ENCODE measurements at regions of chr14 and their contacts with region 1.

Region 1: GRCh38 chr14:105086833-105087307 is 21.6 kb upstream of the GPR132 start:
- DNase-seq: peak; percentile 93
- H3K4me3 Mint-ChIP-seq: peak overlapping the region; percentile 76
- H3K27ac Mint-ChIP-seq: peak overlapping the region; percentile 63
- H3K4me1 Mint-ChIP-seq: peaks cover 8% of the 10 kb centered on the region
- H3K27me3 Mint-ChIP-seq: no peaks in the 10 kb centered on the region

Region 2: GRCh38 chr14:104759001-104759969 is 327.6 kb before region 1 on chr14:
- CTCF ChIA-PET with region 1: no interaction called
- intact Hi-C with region 1: no loop called
- DNase-seq: no peak
- H3K4me3 Mint-ChIP-seq: no peak overlapping the region
- H3K27ac Mint-ChIP-seq: no peak overlapping the region
- H3K4me1 Mint-ChIP-seq: peaks cover 25% of the 10 kb centered on the region
- H3K27me3 Mint-ChIP-seq: no peaks in the 10 kb centered on the region

Region 3: GRCh38 chr14:104976198-104977007 is 110.5 kb before region 1 on chr14:
- CTCF ChIA-PET with region 1: interaction called, 3 read pairs
- intact Hi-C with region 1: loop called (anchors 1 kb)
- DNase-seq: peak; percentile 89
- H3K4me3 Mint-ChIP-seq: peak overlapping the region; percentile 30
- H3K27ac Mint-ChIP-seq: no peak overlapping the region
- H3K4me1 Mint-ChIP-seq: peaks cover 11% of the 10 kb centered on the region
- H3K27me3 Mint-ChIP-seq: peaks cover 17% of the 10 kb centered on the region

Region 4: DNA sequence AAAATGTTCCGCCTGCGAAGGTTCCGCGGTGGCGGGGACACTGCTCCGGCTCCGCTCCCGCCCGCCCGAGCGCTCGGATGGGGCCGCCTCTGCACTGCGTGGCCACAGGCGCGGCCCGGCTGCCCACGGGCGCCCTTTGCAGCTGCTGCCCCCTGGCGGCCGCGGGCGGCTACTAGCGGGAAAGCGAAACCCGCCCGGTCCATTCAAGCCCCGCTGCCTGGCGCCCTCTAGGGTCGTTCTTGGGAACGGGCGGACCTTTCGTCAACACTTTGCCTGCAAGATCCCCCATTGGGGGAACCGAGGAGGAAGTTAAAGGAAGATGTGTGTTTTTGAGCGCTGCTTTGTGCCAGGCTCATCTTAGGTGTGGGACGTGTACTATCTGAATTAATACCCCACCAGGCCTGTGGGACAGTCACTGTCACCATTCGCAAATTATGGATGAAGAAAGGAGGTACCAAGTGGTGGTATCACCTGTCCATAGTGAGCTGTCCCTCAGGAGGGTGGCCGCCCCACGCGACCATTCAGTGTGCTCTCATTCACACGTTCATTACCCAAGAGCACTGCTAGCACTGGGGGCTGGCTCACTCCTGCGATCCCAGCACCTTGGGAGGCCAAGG is 41.1 kb before region 1 on chr14:
- CTCF ChIA-PET with region 1: interaction called, 13 read pairs
- intact Hi-C with region 1: loop called (anchors 5 kb)
- DNase-seq: peak; percentile 95
- H3K4me3 Mint-ChIP-seq: no peak overlapping the region
- H3K27ac Mint-ChIP-seq: no peak overlapping the region
- H3K4me1 Mint-ChIP-seq: peaks cover 5% of the 10 kb centered on the region
- H3K27me3 Mint-ChIP-seq: no peaks in the 10 kb centered on the region

Region 5: GRCh38 chr14:105065280-105066228 is 21.3 kb before region 1 on chr14 and contains the start of gene GPR132:
- CTCF ChIA-PET with region 1: interaction called, 53 read pairs
- intact Hi-C with region 1: loop called (anchors 1 kb)
- DNase-seq: peak; percentile 97
- H3K4me3 Mint-ChIP-seq: peak within 1 kb of the TSS; percentile 84
- H3K27ac Mint-ChIP-seq: peak within 1 kb of the TSS; percentile 96
- H3K4me1 Mint-ChIP-seq: peaks cover 81% of the 10 kb centered on the region
- H3K27me3 Mint-ChIP-seq: no peaks in the 10 kb centered on the region
- total RNA-seq, gene GPR132: 11.3 to 15.3 TPM

Region 6: DNA sequence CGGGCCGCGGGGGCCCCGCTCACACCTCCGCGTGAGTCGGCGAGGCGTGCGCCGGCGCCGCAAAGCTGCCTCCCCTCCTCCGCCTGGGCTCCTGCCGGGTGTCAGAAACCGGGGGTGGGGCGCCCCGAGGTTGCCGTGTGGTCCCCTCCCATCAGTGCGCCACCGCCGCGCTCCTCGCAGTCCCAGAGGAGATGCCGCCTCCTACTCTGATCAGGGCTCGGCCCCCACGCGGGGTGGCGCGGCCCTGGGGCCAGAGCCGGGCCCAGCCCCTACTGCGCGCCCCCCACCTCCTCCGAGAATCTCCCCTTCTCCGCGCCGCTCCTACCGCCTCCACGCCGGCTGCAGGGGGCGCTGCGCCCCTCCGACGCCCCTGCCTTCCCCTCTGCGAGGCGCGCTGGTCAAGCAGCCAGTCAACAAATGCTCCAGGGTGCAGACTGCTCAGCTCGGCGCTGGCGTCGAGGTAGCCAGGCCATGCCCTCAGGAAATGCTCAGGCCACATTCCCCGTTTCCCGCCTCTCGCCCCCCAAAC is 82.2 kb after region 1 on chr14:
- CTCF ChIA-PET with region 1: interaction called, 3 read pairs
- intact Hi-C with region 1: loop called (anchors 5 kb)
- DNase-seq: peak; percentile 30
- H3K4me3 Mint-ChIP-seq: peak overlapping the region; percentile 47
- H3K27ac Mint-ChIP-seq: no peak overlapping the region
- H3K4me1 Mint-ChIP-seq: peaks cover 16% of the 10 kb centered on the region
- H3K27me3 Mint-ChIP-seq: peaks cover 12% of the 10 kb centered on the region

Region 7: DNA sequence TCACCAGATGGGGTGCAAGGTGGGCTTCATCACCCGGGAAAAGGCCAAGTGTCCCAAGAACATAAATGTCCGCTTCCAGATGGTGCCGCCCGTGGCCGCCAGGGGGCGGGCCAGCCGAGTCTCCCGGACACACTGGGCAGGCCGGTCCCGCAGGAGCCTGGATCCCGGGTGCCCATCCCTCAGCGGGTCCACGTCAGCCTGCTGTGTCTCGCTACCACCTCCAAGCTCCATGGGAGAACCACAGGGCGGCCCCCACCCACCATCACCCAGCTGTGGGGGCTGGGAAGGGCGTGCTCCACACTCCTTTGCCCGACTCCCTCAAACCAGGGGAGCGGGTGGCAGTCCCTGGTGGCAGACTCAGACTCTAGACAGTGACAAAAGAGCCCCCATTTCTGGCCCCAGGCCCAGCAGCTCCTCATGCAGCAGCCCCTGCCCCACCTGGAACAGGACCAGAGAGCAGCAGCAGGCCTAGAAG is 116.2 kb after region 1 on chr14:
- CTCF ChIA-PET with region 1: no interaction called
- intact Hi-C with region 1: loop called (anchors 5 kb)
- DNase-seq: peak; percentile 70
- H3K4me3 Mint-ChIP-seq: no peak overlapping the region
- H3K27ac Mint-ChIP-seq: no peak overlapping the region
- H3K4me1 Mint-ChIP-seq: peaks cover 6% of the 10 kb centered on the region
- H3K27me3 Mint-ChIP-seq: peaks cover 17% of the 10 kb centered on the region

Region 8: GRCh38 chr14:105248368-105248756 is 161.5 kb after region 1 on chr14 and contains the start of gene BTBD6:
- CTCF ChIA-PET with region 1: no interaction called
- intact Hi-C with region 1: no loop called
- DNase-seq: peak; percentile 87
- H3K4me3 Mint-ChIP-seq: peak within 1 kb of the TSS; percentile 73
- H3K27ac Mint-ChIP-seq: no peak within 1 kb of the TSS
- H3K4me1 Mint-ChIP-seq: peaks cover 20% of the 10 kb centered on the region
- H3K27me3 Mint-ChIP-seq: no peaks in the 10 kb centered on the region
- total RNA-seq, gene BTBD6: 24.6 to 25.6 TPM

Region 9: GRCh38 chr14:105351920-105352851 is 265.3 kb after region 1 on chr14:
- CTCF ChIA-PET with region 1: interaction called, 4 read pairs
- intact Hi-C with region 1: loop called (anchors 1 kb)
- DNase-seq: peak; percentile 96
- H3K4me3 Mint-ChIP-seq: no peak overlapping the region
- H3K27ac Mint-ChIP-seq: no peak overlapping the region
- H3K4me1 Mint-ChIP-seq: peaks cover 3% of the 10 kb centered on the region
- H3K27me3 Mint-ChIP-seq: no peaks in the 10 kb centered on the region